ENCODE measurements at regions of chr15 and their contacts with region 1.

Region 1: DNA sequence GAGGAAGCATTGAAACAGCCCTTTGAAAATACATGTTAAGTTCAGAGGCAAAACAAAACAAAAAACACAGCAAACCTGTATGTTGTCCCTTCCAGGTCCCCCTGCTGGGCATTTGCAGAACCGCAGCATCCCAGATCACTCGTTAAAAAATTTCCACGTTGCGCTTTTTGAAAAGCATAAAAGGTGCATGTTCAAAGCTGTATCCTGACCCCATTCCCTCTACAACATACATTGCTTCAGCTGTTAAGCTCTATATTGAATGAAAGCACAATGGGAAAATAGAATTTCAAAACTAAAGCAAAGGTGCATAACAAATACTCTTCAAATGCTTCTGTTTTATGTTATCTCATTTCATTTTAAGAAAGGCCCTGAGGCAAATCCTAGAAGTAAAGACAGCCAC is 328.3 kb downstream of the THSD4 start:
- DNase-seq: peak; percentile 26
- CTCF ChIP-seq: peak; percentile 40

Region 2: DNA sequence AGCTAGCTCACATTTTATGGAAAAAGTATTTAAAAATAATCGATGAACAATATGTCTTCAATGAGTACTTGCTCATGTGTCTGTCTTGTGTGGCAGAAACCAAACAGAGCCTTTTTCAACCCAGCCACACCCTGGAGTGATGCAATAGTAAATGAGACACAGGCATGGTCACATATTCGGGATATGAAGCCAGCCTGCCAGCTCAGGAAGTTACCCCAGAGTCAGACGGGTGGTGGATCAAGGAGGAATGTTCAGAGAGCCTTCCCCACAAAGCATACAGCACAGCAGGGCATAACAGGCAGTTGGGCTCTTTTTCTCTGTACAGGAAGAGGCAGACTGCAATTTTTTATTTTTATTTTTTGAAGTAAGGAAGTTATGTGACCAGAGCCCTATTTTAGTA is 616.9 kb before region 1 on chr15:
- CTCF ChIA-PET with region 1: interaction called, 20 read pairs
- POLR2A ChIA-PET with region 1: no interaction called
- DNase-seq: no peak
- CTCF ChIP-seq: no peak

Region 3: DNA sequence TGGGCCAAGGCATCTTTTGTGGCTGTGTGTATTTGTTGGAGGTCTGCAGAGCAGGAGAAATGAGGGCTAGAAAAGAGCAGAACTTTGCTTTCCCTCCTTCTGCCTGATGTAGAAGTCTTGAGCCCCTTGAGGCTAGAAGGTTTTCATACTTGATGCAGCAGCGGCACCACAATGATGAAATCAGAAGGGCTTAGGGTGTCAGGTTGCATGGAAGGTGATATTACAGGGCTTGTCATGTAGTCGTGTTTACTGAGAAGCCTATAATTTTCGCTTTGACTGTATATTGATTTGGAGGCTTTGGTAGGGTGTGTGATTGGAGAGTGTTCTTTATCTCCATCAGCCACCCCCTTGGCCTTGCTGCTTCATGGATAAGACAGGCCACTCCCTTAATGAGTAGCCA is 11.6 kb after region 1 on chr15:
- CTCF ChIA-PET with region 1: interaction called, 11 read pairs
- POLR2A ChIA-PET with region 1: no interaction called
- DNase-seq: no peak
- CTCF ChIP-seq: no peak

Measured in GM10248 (cell line).